ENCODE measurements at regions of chr22 and their contacts with region 1.

Region 1: GRCh38 chr22:21735200-21736076 is at the start of gene YPEL1:
- DNase-seq: peak; percentile 96
- H3K4me3 Mint-ChIP-seq: peak within 1 kb of the TSS; percentile 86
- H3K27ac Mint-ChIP-seq: peak within 1 kb of the TSS; percentile 84
- H3K4me1 Mint-ChIP-seq: peaks cover 18% of the 10 kb centered on the region
- H3K27me3 Mint-ChIP-seq: peaks cover 10% of the 10 kb centered on the region
- total RNA-seq, gene YPEL1: 1.5 and 1.9 TPM in 2 replicates

Region 2: GRCh38 chr22:21816787-21817496 is 81.5 kb after region 1 on chr22:
- intact Hi-C with region 1: loop called (anchors 5 kb)
- DNase-seq: peak; percentile 24
- H3K4me3 Mint-ChIP-seq: peak overlapping the region; percentile 68
- H3K27ac Mint-ChIP-seq: peak overlapping the region; percentile 88
- H3K4me1 Mint-ChIP-seq: peaks cover 54% of the 10 kb centered on the region
- H3K27me3 Mint-ChIP-seq: no peaks in the 10 kb centered on the region

Measured in activated T-helper 2 cell treated with anti-CD3 and anti-CD28 coated beads, Interferon-gamma antibody, Interleukin-2, Interleukin-4, amounts not matched to agents 10 μg/mL and 5 μg/mL and 100 μg/mL, durations not matched to agents 14 hours and 24 hours and 36 hours (primary cell).